ENCODE measurements at regions of chr10 and their contacts with region 1.

Region 1: DNA sequence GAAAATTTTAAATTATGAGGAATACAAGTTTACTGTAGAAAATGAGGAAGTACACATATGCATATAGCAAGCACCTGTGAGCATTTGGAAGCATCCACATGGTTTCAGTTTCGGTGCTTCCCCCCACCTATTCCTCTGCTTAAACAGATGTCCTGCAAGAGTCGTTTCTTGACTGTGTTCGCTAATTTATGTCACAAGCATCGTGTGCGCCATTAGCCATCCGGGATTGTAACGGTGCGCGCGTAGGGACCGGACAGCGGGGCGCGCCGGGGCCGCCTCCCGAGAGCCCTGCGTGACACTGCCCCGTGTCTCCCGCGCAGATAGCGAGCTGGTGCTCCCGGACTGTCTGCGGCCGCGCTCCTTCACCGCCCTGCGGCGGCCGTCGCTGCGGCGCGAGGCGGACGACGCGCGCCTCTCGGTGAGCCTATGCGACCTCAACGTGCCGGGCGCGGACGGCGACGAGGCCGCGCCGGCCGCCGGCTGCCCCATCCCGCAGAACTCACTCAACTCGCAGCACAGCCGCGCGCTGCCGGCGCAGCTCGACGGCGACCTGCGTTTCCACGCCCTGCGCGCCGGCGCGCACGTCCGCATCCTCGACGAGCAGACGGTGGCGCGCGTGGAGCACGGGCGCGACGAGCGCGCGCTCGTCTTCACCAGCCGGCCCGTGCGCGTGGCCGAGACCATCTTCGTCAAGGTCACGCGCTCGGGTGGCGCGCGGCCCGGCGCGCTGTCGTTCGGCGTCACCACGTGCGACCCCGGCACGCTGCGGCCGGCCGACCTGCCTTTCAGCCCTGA is 90.9 kb downstream of the NEURL1 start:
- DNase-seq: peak; percentile 80
- ATAC-seq: peak; percentile 79
- H3K4me3 Mint-ChIP-seq: peak overlapping the region; percentile 86
- H3K27ac Mint-ChIP-seq: peak overlapping the region; percentile 83
- H3K4me1 Mint-ChIP-seq: peaks cover 26% of the 10 kb centered on the region
- H3K27me3 Mint-ChIP-seq: peaks cover 9% of the 10 kb centered on the region

Region 2: GRCh38 chr10:103564776-103565520 is 19.5 kb before region 1 on chr10:
- CTCF ChIA-PET with region 1: interaction called, 42 read pairs
- POLR2A ChIA-PET with region 1: no interaction called
- DNase-seq: peak; percentile 49
- ATAC-seq: peak; percentile 47
- H3K4me3 Mint-ChIP-seq: no peak overlapping the region
- H3K27ac Mint-ChIP-seq: no peak overlapping the region
- H3K4me1 Mint-ChIP-seq: no peaks in the 10 kb centered on the region
- H3K27me3 Mint-ChIP-seq: peaks cover 6% of the 10 kb centered on the region

Measured in activated CD8-positive, alpha-beta T cell treated with anti-CD3 and anti-CD28 coated beads, Interleukin-2, amount 10 ng/mL, durations not matched to agents 7 days and 5 days (primary cell).